ENCODE measurements at regions of chr1 and their contacts with region 1.

Region 1: DNA sequence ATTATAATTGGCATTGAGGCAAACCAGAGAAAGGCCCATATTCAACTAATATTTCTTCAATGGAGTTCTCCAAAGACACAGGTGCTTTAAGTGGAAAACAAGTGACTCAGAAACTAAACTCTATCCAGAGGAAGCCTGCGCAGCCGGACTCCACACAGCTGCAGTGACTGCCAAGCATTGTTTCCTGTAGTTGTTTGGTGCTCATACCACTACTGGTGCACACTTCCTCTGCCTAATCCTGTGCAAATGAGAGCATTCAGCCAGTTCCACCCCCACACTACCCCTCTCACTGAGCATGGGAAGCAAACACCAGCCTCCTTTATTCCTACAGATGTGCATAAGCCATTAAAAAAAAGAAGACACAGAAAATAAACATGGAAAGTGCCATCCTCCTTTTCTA is 102.9 kb downstream of the VAV3 start:
- DNase-seq: no peak
- ATAC-seq: no peak

Region 2: GRCh38 chr1:107795994-107796393 is 66.1 kb before region 1 on chr1:
- intact Hi-C with region 1: loop called (anchors 2 kb)
- DNase-seq: no peak
- ATAC-seq: no peak

Region 3: GRCh38 chr1:108357802-108358201 is 495.7 kb after region 1 on chr1:
- intact Hi-C with region 1: no loop called
- DNase-seq: no peak
- ATAC-seq: no peak